PC-3 (cell line): ENCODE measurements at regions of chr15 and their contacts with region 1.

Region 1: DNA sequence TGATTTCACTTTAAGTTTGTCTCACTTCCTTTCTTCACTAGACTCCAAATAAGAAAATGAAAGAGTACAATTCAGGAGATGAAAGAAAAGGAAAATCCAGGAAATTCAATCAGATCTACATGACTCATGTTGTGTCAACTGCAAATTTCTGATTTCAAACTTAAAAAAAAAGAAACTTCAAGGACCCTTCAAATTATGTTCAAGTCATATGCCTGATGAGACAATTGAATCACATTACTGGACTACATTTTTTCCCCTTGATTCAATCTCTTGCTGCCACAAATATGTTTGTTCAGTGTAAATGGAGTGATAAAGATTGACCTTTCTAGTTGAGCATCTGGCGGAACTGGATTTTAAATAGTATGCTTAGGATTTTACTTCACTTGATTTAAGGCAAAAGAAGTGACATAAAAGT is 37.4 kb downstream of the FRMD5 start:
- DNase-seq: peak; percentile 97
- ATAC-seq: peak; percentile 90
- H3K4me3 ChIP-seq: peak overlapping the region; percentile 49; the same call in 1 of the 2 replicates
- H3K27ac ChIP-seq: peak overlapping the region; percentile 93
- H3K4me1 ChIP-seq: peaks cover 39% of the 10 kb centered on the region
- H3K27me3 ChIP-seq: no peaks in the 10 kb centered on the region
- CTCF ChIP-seq: no peak

Region 2: DNA sequence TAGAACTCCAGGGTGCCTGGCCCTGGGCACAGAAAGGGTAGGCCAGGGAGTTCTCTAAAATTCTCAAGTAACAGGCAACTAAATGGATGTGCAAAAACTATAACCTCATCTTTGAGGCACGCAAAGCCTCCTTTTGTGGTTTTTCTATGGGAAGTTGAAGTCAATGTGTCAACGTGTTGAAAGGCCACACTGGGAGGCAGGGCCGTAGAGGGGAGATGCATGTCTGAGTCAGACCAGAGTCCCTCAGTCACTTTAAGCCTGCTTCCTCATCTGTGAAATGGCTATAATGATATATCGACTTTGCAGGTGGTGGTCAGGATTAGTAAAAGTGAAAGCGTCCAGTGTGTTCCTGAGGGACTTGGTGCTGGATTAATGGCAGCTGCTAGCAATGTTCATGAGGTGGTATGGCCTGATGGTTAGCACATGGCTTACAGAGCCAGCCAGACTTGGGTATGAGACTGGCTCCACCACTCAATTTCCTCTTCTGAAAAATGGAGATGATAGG is 907.9 kb before region 1 on chr15:
- CTCF ChIA-PET with region 1: no interaction called
- POLR2A ChIA-PET with region 1: no interaction called
- intact Hi-C with region 1: no loop called
- DNase-seq: peak; percentile 57
- ATAC-seq: peak; percentile 18; the same call in 1 of the 2 replicates
- H3K4me3 ChIP-seq: no peak overlapping the region
- H3K27ac ChIP-seq: peak overlapping the region; percentile 29
- H3K4me1 ChIP-seq: peaks cover 18% of the 10 kb centered on the region
- H3K27me3 ChIP-seq: no peaks in the 10 kb centered on the region
- CTCF ChIP-seq: no peak

Region 3: GRCh38 chr15:43913026-43913927 is 244.4 kb before region 1 on chr15:
- CTCF ChIA-PET with region 1: no interaction called
- POLR2A ChIA-PET with region 1: no interaction called
- intact Hi-C with region 1: loop called (anchors 5 kb)
- DNase-seq: peak; percentile 96
- ATAC-seq: peak; percentile 87
- H3K4me3 ChIP-seq: no peak overlapping the region
- H3K27ac ChIP-seq: peak overlapping the region; percentile 75
- H3K4me1 ChIP-seq: peaks cover 38% of the 10 kb centered on the region
- H3K27me3 ChIP-seq: no peaks in the 10 kb centered on the region
- CTCF ChIP-seq: no peak

Region 4: GRCh38 chr15:44195151-44195740 is 37.6 kb after region 1 on chr15 and contains the start of gene FRMD5:
- CTCF ChIA-PET with region 1: no interaction called
- POLR2A ChIA-PET with region 1: no interaction called
- intact Hi-C with region 1: loop called (anchors 1 kb)
- DNase-seq: peak; percentile 98
- ATAC-seq: peak; percentile 84
- H3K4me3 ChIP-seq: peak within 1 kb of the TSS; percentile 81
- H3K27ac ChIP-seq: peak within 1 kb of the TSS; percentile 51
- H3K4me1 ChIP-seq: peaks cover 30% of the 10 kb centered on the region
- H3K27me3 ChIP-seq: no peaks in the 10 kb centered on the region
- CTCF ChIP-seq: peak; percentile 37; the same call in 1 of the 2 replicates
- total RNA-seq, gene FRMD5: 8.7 and 12.2 TPM in 2 replicates